ENCODE measurements at regions of chr11 and their contacts with region 1.

Region 1: GRCh38 chr11:58286249-58286648 is 18.2 kb upstream of the OR10W1 start:
- DNase-seq: peak; percentile 54
- ATAC-seq: peak; percentile 98
- H3K4me3 ChIP-seq: no peak overlapping the region
- H3K27ac ChIP-seq: no peak overlapping the region
- H3K4me1 ChIP-seq: 0 out of 2 replicates have a peak, but pooled peaks cover 9% of the 10 kb centered on the region
- H3K27me3 ChIP-seq: no peaks in the 10 kb centered on the region
- CTCF ChIP-seq: peak; percentile 85
- EP300 ChIP-seq: no peak
- POLR2A ChIP-seq: no peak
- RAD21 ChIP-seq: peak; percentile 54

Region 2: DNA sequence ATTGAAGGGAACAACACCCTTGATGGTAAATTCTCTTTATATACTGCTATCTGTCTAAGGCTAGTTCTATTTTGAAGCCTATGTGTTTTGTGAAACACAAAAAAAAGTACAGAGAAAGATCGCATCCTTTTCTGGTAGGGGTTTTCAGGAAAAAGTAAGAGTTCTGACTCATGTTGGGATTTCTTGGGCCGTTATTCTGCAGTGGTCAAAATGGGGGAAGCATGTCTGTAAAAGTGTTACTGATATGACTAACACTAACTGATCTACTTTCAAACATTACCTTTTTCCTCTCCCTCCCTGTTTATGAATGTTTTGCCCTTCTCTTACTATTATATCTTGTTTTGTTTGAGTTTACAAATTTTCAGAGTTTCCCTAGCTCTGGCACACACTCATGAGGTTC is 470.8 kb before region 1 on chr11:
- CTCF ChIA-PET with region 1: no interaction called
- POLR2A ChIA-PET with region 1: no interaction called
- in situ Hi-C with region 1: loop called (anchors 10 kb)
- intact Hi-C with region 1: loop called (anchors 5 kb)
- DNase-seq: no peak
- ATAC-seq: no peak
- H3K4me3 ChIP-seq: no peak overlapping the region
- H3K27ac ChIP-seq: no peak overlapping the region
- H3K4me1 ChIP-seq: peaks cover 15% of the 10 kb centered on the region
- H3K27me3 ChIP-seq: no peaks in the 10 kb centered on the region
- CTCF ChIP-seq: no peak
- EP300 ChIP-seq: no peak
- POLR2A ChIP-seq: no peak
- RAD21 ChIP-seq: no peak

Region 3: GRCh38 chr11:57823859-57824258 is 462.4 kb before region 1 on chr11:
- CTCF ChIA-PET with region 1: no interaction called
- POLR2A ChIA-PET with region 1: no interaction called
- in situ Hi-C with region 1: loop called (anchors 10 kb)
- intact Hi-C with region 1: loop called (anchors 5 kb)
- DNase-seq: no peak
- ATAC-seq: peak; percentile 25; the same call in 2 of the 3 replicates
- H3K4me3 ChIP-seq: no peak overlapping the region
- H3K27ac ChIP-seq: no peak overlapping the region
- H3K4me1 ChIP-seq: peaks cover 10% of the 10 kb centered on the region
- H3K27me3 ChIP-seq: no peaks in the 10 kb centered on the region
- CTCF ChIP-seq: no peak
- EP300 ChIP-seq: no peak
- POLR2A ChIP-seq: no peak
- RAD21 ChIP-seq: no peak

Region 4: GRCh38 chr11:58776891-58777710 is 490.9 kb after region 1 on chr11:
- CTCF ChIA-PET with region 1: no interaction called
- POLR2A ChIA-PET with region 1: no interaction called
- in situ Hi-C with region 1: no loop called
- intact Hi-C with region 1: no loop called
- DNase-seq: no peak
- ATAC-seq: no peak
- H3K4me3 ChIP-seq: no peak overlapping the region
- H3K27ac ChIP-seq: no peak overlapping the region
- H3K4me1 ChIP-seq: peaks cover 17% of the 10 kb centered on the region; the same call in 1 of the 2 replicates
- H3K27me3 ChIP-seq: no peaks in the 10 kb centered on the region; a peak in 1 of 5 replicates
- CTCF ChIP-seq: no peak
- EP300 ChIP-seq: no peak
- POLR2A ChIP-seq: no peak
- RAD21 ChIP-seq: no peak

Measured in HepG2 (cell line).